Activated B cell treated with CpG ODN at 0.5 μM for 24 hours (primary cell): ENCODE measurements at regions of chr3 and their contacts with region 1.

Region 1: GRCh38 chr3:50260027-50260941 is 8.7 kb upstream of the SEMA3B start:
- DNase-seq: peak; percentile 91
- ATAC-seq: peak; percentile 93
- H3K4me3 Mint-ChIP-seq: peak overlapping the region; percentile 73
- H3K27ac Mint-ChIP-seq: peak overlapping the region; percentile 50
- H3K4me1 Mint-ChIP-seq: peaks cover 7% of the 10 kb centered on the region
- H3K27me3 Mint-ChIP-seq: no peaks in the 10 kb centered on the region
- CTCF ChIP-seq: no peak

Region 2: DNA sequence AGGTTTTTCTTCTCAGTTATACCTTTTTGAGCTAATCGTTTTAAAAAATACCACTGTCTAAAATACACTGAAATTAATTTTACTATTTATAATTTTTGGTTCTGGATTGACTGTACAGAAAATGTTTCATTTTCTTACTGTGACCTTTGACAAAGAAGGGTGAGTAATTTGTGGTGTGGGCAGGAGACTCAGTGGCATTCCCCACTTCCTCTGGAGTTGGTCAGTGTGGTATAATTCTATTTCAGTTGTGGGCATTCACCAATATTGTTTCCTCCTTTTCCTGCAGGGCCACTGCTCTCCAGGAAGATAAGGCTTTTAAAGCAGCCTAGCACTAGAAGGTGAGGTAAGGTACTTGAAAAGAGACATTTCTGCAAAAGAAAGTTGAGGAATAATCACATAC is 783.7 kb before region 1 on chr3:
- CTCF ChIA-PET with region 1: no interaction called
- POLR2A ChIA-PET with region 1: interaction called, 13 read pairs
- intact Hi-C with region 1: no loop called
- DNase-seq: no peak
- ATAC-seq: peak; percentile 21
- H3K4me3 Mint-ChIP-seq: no peak overlapping the region
- H3K27ac Mint-ChIP-seq: peak overlapping the region; percentile 24
- H3K4me1 Mint-ChIP-seq: peaks cover 18% of the 10 kb centered on the region
- H3K27me3 Mint-ChIP-seq: no peaks in the 10 kb centered on the region
- CTCF ChIP-seq: no peak

Region 3: DNA sequence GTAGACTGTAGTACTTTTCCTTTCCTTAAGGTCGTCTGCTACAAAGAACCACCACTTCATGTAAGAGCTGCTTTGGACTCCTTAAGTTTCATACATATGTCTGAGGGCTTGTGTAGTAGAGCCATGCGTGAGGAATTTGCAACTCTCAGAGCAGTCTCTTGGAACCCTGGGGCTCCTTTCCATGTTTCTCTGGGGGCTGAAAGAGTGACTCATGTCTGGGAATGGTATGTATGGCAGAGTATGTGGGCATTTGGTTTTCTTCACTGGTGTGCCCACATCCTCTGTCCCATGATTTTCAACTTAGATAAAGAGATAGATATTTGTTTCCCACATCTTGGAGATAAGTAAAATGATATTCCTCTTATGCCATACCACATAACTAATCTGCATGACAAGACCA is 192.2 kb before region 1 on chr3:
- CTCF ChIA-PET with region 1: no interaction called
- POLR2A ChIA-PET with region 1: no interaction called
- intact Hi-C with region 1: no loop called
- DNase-seq: no peak
- ATAC-seq: no peak
- H3K4me3 Mint-ChIP-seq: no peak overlapping the region
- H3K27ac Mint-ChIP-seq: no peak overlapping the region
- H3K4me1 Mint-ChIP-seq: no peaks in the 10 kb centered on the region
- H3K27me3 Mint-ChIP-seq: no peaks in the 10 kb centered on the region
- CTCF ChIP-seq: no peak

Region 4: DNA sequence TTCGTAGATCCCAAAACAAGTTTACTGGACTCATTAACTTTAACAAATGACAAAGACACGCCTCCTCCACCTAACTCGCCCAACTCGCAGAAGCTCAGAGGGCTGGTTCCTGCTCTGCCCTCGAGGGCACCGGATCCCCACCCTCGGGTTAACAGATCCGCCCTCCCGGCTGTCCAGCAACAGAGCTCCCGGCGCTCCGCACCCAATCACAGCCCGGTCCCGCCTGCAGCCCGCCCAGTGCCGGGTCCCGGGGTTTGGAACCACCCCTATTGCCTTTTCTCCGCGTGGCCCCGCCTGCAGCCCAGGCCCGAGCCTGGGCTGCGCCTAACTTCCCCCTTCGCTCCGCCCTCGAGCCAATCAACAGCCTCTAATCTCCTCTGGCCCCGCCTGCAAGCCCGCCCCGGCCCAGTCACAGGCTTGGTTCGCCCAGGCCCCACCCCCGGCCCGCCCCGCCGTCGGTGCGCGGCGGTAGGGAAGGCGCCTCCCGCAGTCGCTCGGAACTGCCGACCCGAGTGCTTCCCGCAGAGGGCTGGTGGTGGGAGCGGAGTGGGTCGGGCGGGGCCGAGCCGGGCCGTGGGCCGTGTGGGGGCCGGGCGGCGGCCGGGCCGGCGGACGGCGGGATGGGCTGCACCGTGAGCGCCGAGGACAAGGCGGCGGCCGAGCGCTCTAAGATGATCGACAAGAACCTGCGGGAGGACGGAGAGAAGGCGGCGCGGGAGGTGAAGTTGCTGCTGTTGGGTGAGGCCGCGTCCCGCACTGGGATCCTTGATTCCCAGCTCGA is 24.4 kb before region 1 on chr3 and contains the start of gene GNAI2:
- CTCF ChIA-PET with region 1: interaction called, 4 read pairs
- POLR2A ChIA-PET with region 1: interaction called, 10 read pairs
- intact Hi-C with region 1: no loop called
- DNase-seq: peak; percentile 97
- ATAC-seq: peak; percentile 89
- H3K4me3 Mint-ChIP-seq: peak within 1 kb of the TSS; percentile 95
- H3K27ac Mint-ChIP-seq: peak within 1 kb of the TSS; percentile 91
- H3K4me1 Mint-ChIP-seq: peaks cover 54% of the 10 kb centered on the region
- H3K27me3 Mint-ChIP-seq: no peaks in the 10 kb centered on the region
- CTCF ChIP-seq: no peak
- total RNA-seq, gene GNAI2: 281 and 295 TPM in 2 replicates

Region 5: DNA sequence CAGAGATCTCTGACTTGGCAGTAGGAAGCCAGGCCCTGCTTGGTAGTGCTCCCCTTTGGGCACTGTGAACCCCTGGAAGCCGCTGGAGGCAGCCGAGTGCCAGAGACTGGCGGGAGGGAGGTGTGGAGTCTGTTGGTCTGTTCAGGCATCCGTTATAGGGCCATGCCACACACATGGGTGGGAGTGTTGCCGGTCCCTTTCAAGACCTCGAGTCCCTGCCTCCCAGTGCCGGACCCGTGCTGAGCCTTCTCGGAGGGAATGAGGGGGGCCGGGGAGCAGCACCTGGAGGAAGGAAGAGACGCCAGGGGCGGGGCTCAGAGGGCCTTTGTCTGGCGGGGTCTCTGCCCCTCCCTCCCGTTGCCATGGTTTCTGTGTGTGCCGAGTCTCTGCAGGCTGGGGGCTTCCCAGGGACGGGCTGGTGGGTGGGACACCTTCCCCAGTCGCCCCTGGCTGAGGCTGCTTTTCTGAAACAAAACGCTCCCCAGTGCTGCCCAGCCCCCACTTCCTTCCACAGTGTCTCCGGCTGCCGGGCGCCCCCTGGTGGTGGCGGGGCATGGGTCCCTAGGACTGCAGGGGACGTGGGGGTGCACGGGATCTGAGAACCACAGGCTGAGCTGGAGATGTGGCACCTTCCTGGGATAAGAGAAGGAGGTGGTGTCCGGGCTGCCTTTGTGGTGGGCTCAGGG is 14.3 kb before region 1 on chr3:
- CTCF ChIA-PET with region 1: interaction called, 34 read pairs
- POLR2A ChIA-PET with region 1: interaction called, 12 read pairs
- intact Hi-C with region 1: loop called (anchors 1 kb)
- DNase-seq: peak; percentile 95
- ATAC-seq: peak; percentile 72
- H3K4me3 Mint-ChIP-seq: peak overlapping the region; percentile 75
- H3K27ac Mint-ChIP-seq: peak overlapping the region; percentile 94
- H3K4me1 Mint-ChIP-seq: peaks cover 88% of the 10 kb centered on the region
- H3K27me3 Mint-ChIP-seq: no peaks in the 10 kb centered on the region
- CTCF ChIP-seq: peak; percentile 79

Region 6: DNA sequence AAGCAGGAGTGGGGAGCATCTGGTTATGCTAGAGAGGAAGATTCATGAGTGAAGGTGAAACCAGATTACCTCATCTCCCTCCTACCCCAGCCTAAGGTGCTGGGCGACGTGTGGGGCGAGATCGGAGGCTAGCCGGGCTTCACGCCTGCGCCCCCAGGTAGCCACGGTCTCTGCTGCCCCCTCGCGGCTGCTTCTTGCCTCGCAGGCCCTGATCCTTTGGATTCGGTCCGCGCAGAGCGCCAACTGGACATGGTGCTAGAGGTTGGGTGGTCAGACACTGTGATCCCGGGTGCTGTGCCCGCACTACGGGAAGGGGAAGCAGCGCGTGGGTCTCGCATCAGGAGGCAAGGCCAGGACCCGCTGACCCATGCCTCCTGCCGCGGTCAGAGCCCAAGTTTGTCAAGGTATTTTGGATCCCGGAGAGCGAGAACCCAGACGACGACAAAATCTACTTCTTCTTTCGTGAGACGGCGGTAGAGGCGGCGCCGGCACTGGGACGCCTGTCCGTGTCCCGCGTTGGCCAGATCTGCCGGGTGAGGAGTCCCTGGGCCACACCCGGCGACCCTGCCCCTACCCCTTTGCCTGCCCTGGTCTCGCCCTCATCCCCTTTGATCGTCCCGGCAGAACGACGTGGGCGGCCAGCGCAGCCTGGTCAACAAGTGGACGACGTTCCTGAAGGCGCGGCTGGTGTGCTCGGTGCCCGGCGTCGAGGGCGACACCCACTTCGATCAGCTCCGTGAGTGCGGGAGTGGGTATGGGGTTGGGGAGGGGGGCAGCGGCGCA is 12.8 kb after region 1 on chr3:
- CTCF ChIA-PET with region 1: no interaction called
- POLR2A ChIA-PET with region 1: no interaction called
- intact Hi-C with region 1: loop called (anchors 1 kb)
- DNase-seq: peak; percentile 91
- ATAC-seq: peak; percentile 98
- H3K4me3 Mint-ChIP-seq: peak overlapping the region; percentile 69
- H3K27ac Mint-ChIP-seq: no peak overlapping the region
- H3K4me1 Mint-ChIP-seq: peaks cover 25% of the 10 kb centered on the region
- H3K27me3 Mint-ChIP-seq: peaks cover 35% of the 10 kb centered on the region
- CTCF ChIP-seq: no peak

Region 7: DNA sequence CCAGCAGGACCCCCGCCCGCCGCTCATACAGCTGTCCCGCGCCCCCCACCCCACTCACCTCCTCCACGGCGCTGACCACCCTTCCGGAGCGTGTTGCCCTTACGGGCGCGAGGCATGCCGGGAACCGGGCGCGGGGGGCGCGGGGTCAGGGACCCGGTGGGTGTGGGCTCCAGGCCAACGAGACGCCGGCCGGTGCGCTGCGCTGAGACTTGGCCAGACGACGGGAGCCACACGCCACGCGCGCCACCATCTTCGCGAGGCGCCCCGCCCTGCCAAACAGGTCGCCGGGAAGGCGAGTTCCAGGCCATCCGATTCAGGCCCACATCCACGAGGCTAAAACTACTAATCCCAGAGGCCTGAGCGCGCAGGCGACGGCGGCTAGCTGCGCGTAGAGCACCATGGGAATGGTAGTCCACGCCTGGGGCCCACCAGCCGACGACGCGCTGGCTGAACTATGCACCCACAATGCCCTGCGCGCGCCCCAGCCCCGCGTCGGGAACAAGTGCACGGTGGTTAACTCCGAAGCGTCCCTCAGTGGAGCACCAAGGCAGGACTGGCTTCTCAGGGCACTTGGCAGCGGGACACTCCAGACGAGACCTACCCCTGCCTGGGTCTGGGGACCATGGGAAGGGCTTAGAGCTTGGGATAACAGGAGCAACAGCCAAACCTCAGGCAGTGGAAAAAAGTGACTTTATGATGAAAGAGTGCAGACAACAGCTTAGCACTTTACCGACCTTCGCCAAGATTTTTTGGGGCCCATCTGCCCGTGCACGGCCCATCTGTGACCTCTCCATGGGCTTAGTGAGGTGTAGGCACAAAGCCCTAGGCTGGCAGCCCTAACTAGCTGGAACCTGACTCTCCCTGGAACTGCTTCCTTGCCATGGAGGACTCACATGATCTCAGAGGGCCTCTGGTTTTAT is 32.1 kb after region 1 on chr3 and contains the start of gene IFRD2:
- CTCF ChIA-PET with region 1: no interaction called
- POLR2A ChIA-PET with region 1: interaction called, 3 read pairs
- intact Hi-C with region 1: loop called (anchors 1 kb)
- DNase-seq: peak; percentile 87
- ATAC-seq: peak; percentile 99
- H3K4me3 Mint-ChIP-seq: peak within 1 kb of the TSS; percentile 86
- H3K27ac Mint-ChIP-seq: peak within 1 kb of the TSS; percentile 95
- H3K4me1 Mint-ChIP-seq: peaks cover 20% of the 10 kb centered on the region
- H3K27me3 Mint-ChIP-seq: no peaks in the 10 kb centered on the region
- CTCF ChIP-seq: no peak
- total RNA-seq, gene IFRD2: 92.2 and 105 TPM in 2 replicates

Region 8: DNA sequence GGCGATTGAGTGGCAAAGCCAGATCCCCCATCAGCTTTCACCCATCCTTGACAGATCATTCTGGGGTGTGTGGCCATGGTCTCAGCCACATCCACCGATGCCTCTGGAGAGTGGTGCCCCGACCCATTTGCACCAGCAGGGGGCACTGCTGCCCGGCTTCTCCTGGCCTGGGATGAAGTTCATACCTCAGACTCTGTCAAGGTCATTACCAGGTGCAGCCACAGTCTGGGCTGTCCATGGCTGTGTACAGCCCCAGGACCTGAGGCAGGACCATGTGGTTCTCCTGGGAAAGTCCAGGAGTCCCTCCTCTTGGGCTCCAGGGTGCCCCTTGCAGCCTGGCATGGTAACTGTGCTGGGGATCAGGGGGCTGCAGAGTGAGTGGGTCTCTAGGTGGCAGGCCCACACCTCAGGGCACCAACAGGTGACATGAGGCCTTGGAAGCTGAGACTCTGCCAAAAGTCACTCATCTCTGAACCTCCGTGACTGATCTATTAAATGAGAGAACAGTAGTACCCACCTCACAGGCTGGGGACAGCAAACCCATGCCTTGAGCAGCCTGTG is 175.9 kb after region 1 on chr3:
- CTCF ChIA-PET with region 1: no interaction called
- POLR2A ChIA-PET with region 1: no interaction called
- intact Hi-C with region 1: no loop called
- DNase-seq: peak; percentile 64
- ATAC-seq: peak; percentile 86
- H3K4me3 Mint-ChIP-seq: no peak overlapping the region
- H3K27ac Mint-ChIP-seq: no peak overlapping the region
- H3K4me1 Mint-ChIP-seq: no peaks in the 10 kb centered on the region
- H3K27me3 Mint-ChIP-seq: peaks cover 4% of the 10 kb centered on the region
- CTCF ChIP-seq: no peak